Posterior cingulate gyrus (tissue), 11 donors: ENCODE measurements at regions of chr12 and their contacts with region 1.

Region 1: DNA sequence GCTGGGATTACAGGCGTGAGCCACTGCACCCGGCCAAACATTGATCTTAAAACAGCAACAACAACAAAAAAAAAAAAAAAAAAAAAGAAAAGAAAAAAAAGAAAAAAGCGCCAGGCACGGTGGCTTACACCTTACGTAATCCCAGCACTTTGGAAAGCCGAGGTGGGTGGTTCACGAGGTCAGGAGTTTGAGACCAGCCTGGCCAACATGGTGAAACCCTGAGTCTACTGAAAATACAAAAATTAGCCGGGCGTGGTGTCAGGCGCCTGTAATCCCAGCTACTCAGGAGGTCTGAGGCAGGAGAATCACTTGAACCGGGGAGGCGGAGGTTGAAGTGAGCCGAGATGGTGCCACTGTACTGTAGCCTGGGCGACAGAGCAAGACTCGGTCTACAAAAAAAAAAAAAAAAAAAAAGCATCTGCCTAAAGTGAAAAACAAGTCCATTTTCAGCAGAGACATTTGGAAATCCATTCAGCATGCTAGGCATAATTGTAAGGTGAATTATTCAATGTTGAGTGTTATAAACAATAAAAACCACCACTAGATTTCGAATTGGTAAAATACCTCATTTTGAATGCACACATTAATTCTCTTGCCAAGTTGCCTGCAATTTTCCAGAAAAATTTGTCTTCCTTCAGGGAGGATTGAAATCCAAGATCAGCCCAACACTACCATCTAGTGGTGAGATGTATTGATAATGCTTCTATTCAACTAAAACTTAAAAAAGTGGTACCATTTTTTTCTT is 8.0 kb upstream of the CERS5 start:
- DNase-seq: no peak

Region 2: GRCh38 chr12:49967042-49967776 is 207.9 kb before region 1 on chr12:
- intact Hi-C with region 1: loop called (anchors 1 kb)
- DNase-seq: peak; percentile 84 to 99 (median 96)

Region 3: GRCh38 chr12:50132505-50133135 is 42.5 kb before region 1 on chr12:
- intact Hi-C with region 1: loop called (anchors 1 kb)
- DNase-seq: no peak